Prostate gland (tissue), 2 donors: ENCODE measurements at regions of chr10 and their contacts with region 1.

Region 1: GRCh38 chr10:73096449-73097304 is at the start of gene P4HA1:
- DNase-seq: peak; percentile 98
- H3K4me3 ChIP-seq: peak within 1 kb of the TSS; percentile 58 to 68
- H3K27ac ChIP-seq: peak within 1 kb of the TSS; percentile 93 to 96
- H3K4me1 ChIP-seq: no peaks in the 10 kb centered on the region
- H3K27me3 ChIP-seq: no peaks in the 10 kb centered on the region
- CTCF ChIP-seq: peak; percentile 39 to 90 (median 77)
- POLR2A ChIP-seq: peak; percentile 91
- total RNA-seq, gene P4HA1: 16.2 to 26.8 TPM

Region 2: DNA sequence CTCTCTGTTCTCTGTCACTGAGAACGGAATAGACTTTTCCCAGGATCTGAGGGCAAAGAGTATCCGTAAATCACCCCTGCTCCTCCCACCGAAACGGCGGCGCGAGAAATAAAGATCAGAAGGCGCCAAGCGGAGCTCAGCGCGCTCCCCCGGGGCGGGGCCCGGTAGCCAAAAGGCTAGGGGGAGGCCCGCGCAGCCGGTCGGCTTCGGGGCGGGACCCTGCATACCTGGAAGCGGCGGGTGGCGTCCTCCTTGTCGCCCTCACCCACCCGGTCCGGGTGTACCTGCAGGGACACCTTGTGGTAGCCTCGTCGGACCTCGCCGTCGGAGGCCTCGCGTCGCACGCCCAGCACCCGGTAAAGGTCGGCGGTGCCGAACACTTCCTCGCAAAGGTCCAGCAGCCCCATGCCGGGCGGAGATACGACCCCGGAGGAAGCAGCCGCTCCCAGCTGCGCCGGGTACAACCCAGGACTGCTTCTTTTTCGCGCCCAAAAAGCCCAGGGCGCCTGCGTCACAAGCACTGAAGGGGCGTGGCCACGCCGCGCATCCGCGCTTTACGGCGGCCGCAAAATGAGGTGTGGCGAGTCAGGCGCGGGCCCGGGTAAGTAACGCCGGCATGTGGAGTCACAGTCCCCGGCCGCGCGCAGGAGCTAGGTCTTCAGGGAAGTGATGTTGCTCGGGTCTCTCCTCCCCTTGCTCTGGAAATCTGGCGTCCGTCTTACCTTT is 150.3 kb after region 1 on chr10 and contains the start of gene DNAJC9:
- intact Hi-C with region 1: loop called (anchors 5 kb)
- DNase-seq: peak; percentile 95
- H3K4me3 ChIP-seq: peak within 1 kb of the TSS; percentile 71 to 79
- H3K27ac ChIP-seq: peak within 1 kb of the TSS; percentile 81 to 83
- H3K4me1 ChIP-seq: peaks cover 14% of the 10 kb centered on the region
- H3K27me3 ChIP-seq: no peaks in the 10 kb centered on the region
- CTCF ChIP-seq: peak; percentile 7 to 52 (median 32)
- POLR2A ChIP-seq: peak; percentile 75
- total RNA-seq, gene DNAJC9: 17.4 to 26.2 TPM

Region 3: DNA sequence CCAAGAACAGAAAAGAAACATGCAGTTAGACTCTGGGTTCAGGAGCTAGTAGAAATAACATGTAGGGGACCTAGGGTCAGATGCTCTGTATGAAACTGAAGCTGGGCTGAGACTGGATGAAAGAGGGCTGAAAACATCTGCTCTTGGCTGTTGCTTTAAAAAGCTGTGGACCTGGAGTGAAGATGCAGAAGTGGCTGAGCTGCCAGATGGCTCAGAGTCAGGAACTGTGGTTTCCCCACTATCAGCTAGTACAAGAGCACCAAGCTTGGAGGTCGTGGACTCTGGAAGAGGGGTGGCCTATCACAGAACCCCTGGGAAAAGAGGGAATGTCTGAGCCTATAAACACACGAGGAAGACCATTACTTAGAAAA is 1060.2 kb after region 1 on chr10:
- intact Hi-C with region 1: no loop called
- DNase-seq: no peak
- H3K4me3 ChIP-seq: no peak overlapping the region
- H3K27ac ChIP-seq: no peak overlapping the region
- H3K4me1 ChIP-seq: peaks cover 2% of the 10 kb centered on the region
- H3K27me3 ChIP-seq: no peaks in the 10 kb centered on the region
- CTCF ChIP-seq: no peak
- POLR2A ChIP-seq: no peak